AG04450 (cell line): ENCODE measurements at regions of chr19 and their contacts with region 1.

Region 1: DNA sequence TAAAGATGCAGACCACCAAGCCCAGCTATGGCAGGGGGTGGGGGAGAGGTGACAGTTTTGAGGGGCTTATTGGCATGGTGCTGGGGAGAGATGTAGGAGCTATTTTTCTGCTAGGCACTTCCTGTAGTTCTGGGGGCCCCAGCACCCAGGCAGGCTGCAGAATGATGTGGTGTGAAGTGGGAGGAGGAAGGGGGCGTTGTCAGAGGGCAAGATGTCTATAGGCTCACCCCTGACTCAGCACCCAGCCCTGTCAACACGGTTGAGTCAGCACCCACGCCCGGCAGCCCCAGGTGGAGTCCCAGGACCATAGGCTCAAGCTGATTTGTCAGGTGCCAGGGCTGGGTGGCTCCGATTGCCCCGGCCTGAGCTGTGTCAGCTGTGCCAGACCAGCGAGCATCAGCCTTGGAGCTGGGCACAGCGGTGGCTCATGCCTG is 5.8 kb downstream of the KLF2 start:
- DNase-seq: no peak
- H3K4me3 ChIP-seq: no peak overlapping the region
- H3K27ac ChIP-seq: peak overlapping the region; percentile 31
- H3K27me3 ChIP-seq: no peaks in the 10 kb centered on the region
- CTCF ChIP-seq: no peak

Region 2: GRCh38 chr19:16247353-16248182 is 82.8 kb before region 1 on chr19:
- CTCF ChIA-PET with region 1: interaction called, 27 read pairs
- POLR2A ChIA-PET with region 1: interaction called, 3 read pairs
- DNase-seq: peak; percentile 37
- H3K4me3 ChIP-seq: no peak overlapping the region
- H3K27ac ChIP-seq: no peak overlapping the region
- H3K27me3 ChIP-seq: no peaks in the 10 kb centered on the region
- CTCF ChIP-seq: peak; percentile 96

Region 3: GRCh38 chr19:16272945-16273344 is 57.4 kb before region 1 on chr19:
- CTCF ChIA-PET with region 1: no interaction called
- POLR2A ChIA-PET with region 1: no interaction called
- DNase-seq: no peak
- H3K4me3 ChIP-seq: no peak overlapping the region
- H3K27ac ChIP-seq: no peak overlapping the region
- H3K27me3 ChIP-seq: peaks cover 14% of the 10 kb centered on the region
- CTCF ChIP-seq: no peak

Region 4: GRCh38 chr19:16315825-16316505 is 14.4 kb before region 1 on chr19:
- CTCF ChIA-PET with region 1: no interaction called
- POLR2A ChIA-PET with region 1: interaction called, 43 read pairs
- DNase-seq: peak; percentile 98
- H3K4me3 ChIP-seq: peak overlapping the region; percentile 45
- H3K27ac ChIP-seq: peak overlapping the region; percentile 96
- H3K27me3 ChIP-seq: no peaks in the 10 kb centered on the region
- CTCF ChIP-seq: no peak